CD14-positive monocyte (primary cell): ENCODE measurements at regions of chr20 and their contacts with region 1.

Region 1: DNA sequence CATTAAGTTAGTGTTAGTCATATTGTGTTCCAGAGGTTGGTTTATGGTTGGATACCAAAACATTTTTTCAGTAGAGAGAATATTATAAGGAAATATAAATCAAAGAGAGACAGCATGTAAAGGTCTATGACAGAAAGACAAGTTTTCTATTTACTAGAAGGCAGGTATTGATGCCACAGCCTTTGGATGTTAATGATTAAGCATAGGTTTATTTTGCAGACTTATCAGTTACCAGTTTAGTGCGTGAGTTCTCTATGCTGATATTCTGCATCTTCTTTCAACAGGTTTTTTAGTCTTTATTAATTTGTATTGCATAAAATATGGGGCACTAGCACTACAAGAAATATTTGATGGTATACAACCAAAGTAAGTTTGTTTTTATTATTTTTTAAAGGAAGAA is 45.6 kb downstream of the CSE1L start:
- DNase-seq: no peak
- H3K4me3 ChIP-seq: no peak overlapping the region
- H3K4me3 Mint-ChIP-seq: no peak overlapping the region
- H3K27ac ChIP-seq: no peak overlapping the region
- H3K27ac Mint-ChIP-seq: no peak overlapping the region
- H3K4me1 ChIP-seq: no peaks in the 10 kb centered on the region
- H3K4me1 Mint-ChIP-seq: no peaks in the 10 kb centered on the region
- H3K27me3 ChIP-seq: no peaks in the 10 kb centered on the region
- H3K27me3 Mint-ChIP-seq: peaks cover 0 to 1% (median 0%) of the 10 kb centered on the region in 3 donors
- CTCF ChIP-seq: no peak

Region 2: DNA sequence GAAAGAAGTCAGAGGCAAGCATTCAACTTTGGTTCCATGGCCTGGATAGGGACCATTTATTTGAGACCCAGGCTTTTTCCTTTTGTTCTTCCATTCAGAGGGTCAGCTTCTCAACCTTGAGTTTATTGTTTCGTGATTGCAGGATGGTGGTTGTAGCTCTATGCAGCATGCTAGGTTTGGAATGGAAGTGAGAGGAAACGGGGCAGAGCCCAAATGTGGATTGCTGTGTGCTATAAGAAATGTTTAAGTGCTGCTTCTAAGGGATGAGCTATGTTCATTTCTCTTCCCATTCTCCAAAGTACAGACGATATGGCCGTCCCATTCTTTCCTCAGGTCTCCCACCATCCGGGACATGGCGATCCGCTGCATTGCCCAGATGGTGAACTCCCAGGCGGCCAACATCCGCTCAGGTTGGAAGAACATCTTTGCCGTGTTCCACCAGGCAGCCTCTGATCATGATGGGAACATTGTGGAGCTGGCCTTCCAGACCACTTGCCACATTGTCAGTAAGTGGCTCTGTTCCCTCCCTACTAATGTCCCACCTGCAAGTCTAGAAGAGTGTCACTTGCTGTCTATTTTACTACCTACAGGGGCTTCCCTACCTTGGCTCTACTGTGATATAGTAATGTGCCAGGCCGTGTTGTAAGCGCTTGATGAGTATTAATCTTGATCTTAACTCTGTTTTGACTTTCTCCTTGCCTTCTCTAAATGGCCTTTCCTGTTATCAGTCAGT is 81.7 kb before region 1 on chr20:
- intact Hi-C with region 1: loop called in 1 of 2 experiments (anchors 5 kb)
- DNase-seq: no peak
- H3K4me3 ChIP-seq: no peak overlapping the region
- H3K4me3 Mint-ChIP-seq: no peak overlapping the region
- H3K27ac ChIP-seq: no peak overlapping the region
- H3K27ac Mint-ChIP-seq: peak overlapping the region in 1 of 7 donors; percentile 17
- H3K4me1 ChIP-seq: no peaks in the 10 kb centered on the region
- H3K4me1 Mint-ChIP-seq: no peaks in the 10 kb centered on the region
- H3K27me3 ChIP-seq: no peaks in the 10 kb centered on the region
- H3K27me3 Mint-ChIP-seq: no peaks in the 10 kb centered on the region
- CTCF ChIP-seq: no peak